ENCODE measurements at regions of chr1 and their contacts with region 1.

Region 1: DNA sequence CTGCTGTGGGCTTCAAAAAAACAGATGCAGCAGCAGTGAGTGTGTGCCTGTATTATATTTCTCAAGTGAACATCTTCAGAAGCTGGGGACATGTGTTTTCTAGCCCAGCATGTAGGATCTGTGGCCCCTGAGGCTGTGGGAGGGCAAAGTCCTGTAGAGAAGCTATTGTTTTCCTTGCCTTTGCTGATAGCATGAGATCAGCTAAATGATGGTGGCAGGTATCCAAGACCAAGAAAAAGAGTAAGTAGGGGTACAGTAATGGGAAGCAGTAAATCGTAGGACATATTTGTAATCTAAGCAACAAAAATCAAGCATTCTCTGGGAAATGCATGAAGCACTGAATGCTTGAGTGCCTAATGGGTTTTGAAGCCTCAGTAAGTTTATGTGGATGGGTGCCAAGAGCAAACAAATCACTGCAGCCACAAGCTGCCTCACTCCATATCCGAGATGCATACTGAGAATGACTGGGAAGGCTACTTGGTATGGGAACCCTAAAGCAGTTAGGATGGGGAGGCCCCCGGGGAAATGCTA is 98.3 kb downstream of the CD58 start:
- DNase-seq: peak; percentile 62
- ATAC-seq: no peak
- H3K4me3 ChIP-seq: no peak overlapping the region
- H3K27ac ChIP-seq: peak overlapping the region; percentile 58
- H3K4me1 ChIP-seq: peaks cover 100% of the 10 kb centered on the region
- H3K27me3 ChIP-seq: no peaks in the 10 kb centered on the region
- CTCF ChIP-seq: no peak
- EP300 ChIP-seq: no peak; a peak in 1 of 4 replicates
- POLR2A ChIP-seq: no peak
- RAD21 ChIP-seq: no peak

Region 2: DNA sequence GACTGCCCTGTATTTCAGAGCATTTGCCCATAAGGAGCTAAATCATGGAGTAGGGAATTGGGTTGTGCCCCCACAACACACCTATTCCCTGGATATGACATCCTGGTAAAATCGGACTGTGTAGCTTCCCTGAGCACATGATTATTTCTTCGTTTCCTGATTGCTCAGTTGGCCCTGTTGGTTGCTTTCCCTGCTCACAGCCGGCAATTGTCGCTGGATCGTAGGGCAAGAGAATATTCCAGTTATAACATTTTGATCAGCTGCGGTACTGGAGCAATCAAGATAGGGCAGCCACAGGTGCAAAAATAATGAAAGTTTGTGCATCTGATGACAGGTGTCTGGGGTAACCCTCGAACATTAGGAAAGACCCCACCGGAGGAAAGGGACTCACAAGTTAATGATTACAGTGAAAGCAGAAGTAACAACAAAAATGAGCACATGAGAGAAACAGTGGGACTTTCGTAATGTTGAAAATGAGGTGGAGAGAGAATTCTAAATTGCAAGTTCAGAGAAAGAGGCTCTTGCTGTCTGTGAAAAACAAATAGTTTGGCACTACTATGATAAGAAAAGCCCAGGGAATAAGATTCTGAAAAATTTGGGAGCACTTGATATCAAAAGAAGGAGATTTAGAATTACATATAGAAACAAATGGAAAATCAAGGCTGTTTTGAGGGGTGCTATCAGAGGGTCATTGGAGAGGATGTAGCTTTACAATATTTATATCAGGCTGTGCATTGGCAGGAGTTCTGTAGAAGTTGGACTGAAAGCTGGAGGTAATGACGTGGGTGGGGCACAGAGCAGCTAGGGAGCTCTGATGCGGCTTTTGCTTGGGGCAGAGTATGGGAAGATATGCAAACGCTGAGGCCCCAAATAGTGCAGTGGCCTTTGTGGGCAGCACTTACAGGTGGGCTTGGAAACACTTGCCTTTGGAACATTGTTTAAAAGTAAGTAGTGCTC is 361.7 kb before region 1 on chr1 and contains the start of gene MAB21L3:
- CTCF ChIA-PET with region 1: no interaction called
- POLR2A ChIA-PET with region 1: interaction called, 12 read pairs
- in situ Hi-C with region 1: no loop called
- intact Hi-C with region 1: no loop called
- DNase-seq: peak; percentile 54
- ATAC-seq: peak; percentile 74
- H3K4me3 ChIP-seq: peak within 1 kb of the TSS; percentile 55 to 76 (median 65)
- H3K27ac ChIP-seq: peak within 1 kb of the TSS; percentile 61
- H3K4me1 ChIP-seq: peaks cover 90% of the 10 kb centered on the region
- H3K27me3 ChIP-seq: no peaks in the 10 kb centered on the region
- CTCF ChIP-seq: no peak
- EP300 ChIP-seq: no peak
- POLR2A ChIP-seq: no peak
- RAD21 ChIP-seq: no peak
- total RNA-seq, gene MAB21L3: 0.55 and 0.90 TPM in 2 replicates

Region 3: GRCh38 chr1:116377541-116378529 is 94.7 kb before region 1 on chr1:
- CTCF ChIA-PET with region 1: no interaction called
- POLR2A ChIA-PET with region 1: interaction called, 22 read pairs
- in situ Hi-C with region 1: no loop called
- intact Hi-C with region 1: no loop called
- DNase-seq: peak; percentile 79
- ATAC-seq: peak; percentile 21
- H3K4me3 ChIP-seq: peak overlapping the region; percentile 39 to 89 (median 84)
- H3K27ac ChIP-seq: peak overlapping the region; percentile 77
- H3K4me1 ChIP-seq: peaks cover 85% of the 10 kb centered on the region
- H3K27me3 ChIP-seq: peaks cover 0 to 3% of the 10 kb centered on the region in 2 experiments; a peak in 1 of 5 replicates
- CTCF ChIP-seq: no peak
- EP300 ChIP-seq: peak in 1 of 2 experiments; percentile 60; a peak in 2 of 4 replicates
- POLR2A ChIP-seq: peak in 1 of 2 experiments; percentile 41; a peak in 1 of 4 replicates
- RAD21 ChIP-seq: no peak

Region 4: DNA sequence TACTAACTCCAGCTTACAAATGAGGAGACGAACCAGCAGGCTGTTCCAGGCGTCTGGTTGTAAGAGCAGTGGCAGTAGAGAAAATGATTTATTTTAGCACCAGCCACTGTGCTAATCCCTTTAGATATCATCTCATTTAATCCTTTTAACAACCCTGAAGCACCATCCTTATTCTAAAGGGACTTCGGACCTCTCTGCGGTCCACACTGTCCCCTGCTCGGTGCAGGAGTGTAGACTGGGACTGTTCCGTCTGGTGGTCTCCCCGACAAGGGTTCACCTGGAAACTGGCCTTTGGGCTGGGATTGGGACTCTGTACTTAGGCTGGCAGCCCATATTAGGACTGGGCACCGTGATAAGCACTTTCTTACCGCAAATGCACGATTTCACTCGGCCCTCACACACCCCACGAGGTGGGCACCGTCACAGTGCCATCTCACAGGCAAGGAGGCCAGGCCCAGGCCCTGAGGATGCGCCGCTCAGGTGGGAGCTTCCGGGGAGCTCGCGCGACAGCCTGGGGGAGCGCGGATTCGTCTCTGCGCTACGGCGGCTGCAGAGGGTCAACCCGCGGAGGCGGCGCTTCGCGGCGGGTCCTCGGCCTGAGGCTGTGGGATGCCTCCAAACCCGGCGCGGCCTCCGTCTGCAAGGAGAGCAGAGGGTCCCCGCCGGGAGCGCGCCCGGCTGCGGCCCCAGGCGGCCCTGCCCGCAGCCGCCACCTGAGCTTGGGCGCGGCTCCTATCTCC is 54.2 kb before region 1 on chr1:
- CTCF ChIA-PET with region 1: no interaction called
- POLR2A ChIA-PET with region 1: interaction called, 129 read pairs
- in situ Hi-C with region 1: no loop called
- intact Hi-C with region 1: loop called (anchors 5 kb)
- DNase-seq: peak; percentile 61
- ATAC-seq: peak; percentile 83
- H3K4me3 ChIP-seq: peak overlapping the region; percentile 75 to 94 (median 91)
- H3K27ac ChIP-seq: peak overlapping the region; percentile 82
- H3K4me1 ChIP-seq: peaks cover 73% of the 10 kb centered on the region
- H3K27me3 ChIP-seq: no peaks in the 10 kb centered on the region; a peak in 1 of 5 replicates
- CTCF ChIP-seq: peak; percentile 35; the same call in 1 of the 2 replicates
- EP300 ChIP-seq: no peak; a peak in 1 of 4 replicates
- POLR2A ChIP-seq: peak; percentile 87 to 90
- RAD21 ChIP-seq: peak; percentile 64

Region 5: DNA sequence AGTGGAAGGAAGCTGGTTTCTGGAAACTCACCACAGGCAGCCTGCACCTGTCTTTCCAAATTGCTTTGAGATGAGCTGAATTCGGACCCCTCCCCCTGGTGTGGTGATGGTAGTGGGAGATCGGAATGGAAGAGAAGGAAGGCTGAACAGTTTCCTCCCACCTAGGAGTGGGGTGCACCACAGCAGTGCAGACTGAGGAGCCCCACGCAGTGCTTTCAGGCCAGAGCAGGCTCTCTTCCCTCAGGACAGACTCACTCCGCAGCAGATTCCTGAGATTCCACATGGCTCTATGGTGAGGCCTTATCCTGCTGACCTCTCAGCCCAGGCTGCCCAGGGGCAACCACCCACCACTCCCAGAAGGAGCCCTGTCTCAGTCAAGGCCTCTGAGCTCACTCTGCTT is 18.6 kb before region 1 on chr1:
- CTCF ChIA-PET with region 1: no interaction called
- POLR2A ChIA-PET with region 1: interaction called, 32 read pairs
- in situ Hi-C with region 1: no loop called
- intact Hi-C with region 1: loop called (anchors 2 kb)
- DNase-seq: no peak
- ATAC-seq: peak; percentile 91
- H3K4me3 ChIP-seq: no peak overlapping the region
- H3K27ac ChIP-seq: no peak overlapping the region
- H3K4me1 ChIP-seq: peaks cover 52% of the 10 kb centered on the region
- H3K27me3 ChIP-seq: no peaks in the 10 kb centered on the region
- CTCF ChIP-seq: no peak
- EP300 ChIP-seq: no peak
- POLR2A ChIP-seq: no peak
- RAD21 ChIP-seq: no peak

Measured in HepG2 (cell line).